ENCODE measurements at regions of chr16 and their contacts with region 1.

Region 1: DNA sequence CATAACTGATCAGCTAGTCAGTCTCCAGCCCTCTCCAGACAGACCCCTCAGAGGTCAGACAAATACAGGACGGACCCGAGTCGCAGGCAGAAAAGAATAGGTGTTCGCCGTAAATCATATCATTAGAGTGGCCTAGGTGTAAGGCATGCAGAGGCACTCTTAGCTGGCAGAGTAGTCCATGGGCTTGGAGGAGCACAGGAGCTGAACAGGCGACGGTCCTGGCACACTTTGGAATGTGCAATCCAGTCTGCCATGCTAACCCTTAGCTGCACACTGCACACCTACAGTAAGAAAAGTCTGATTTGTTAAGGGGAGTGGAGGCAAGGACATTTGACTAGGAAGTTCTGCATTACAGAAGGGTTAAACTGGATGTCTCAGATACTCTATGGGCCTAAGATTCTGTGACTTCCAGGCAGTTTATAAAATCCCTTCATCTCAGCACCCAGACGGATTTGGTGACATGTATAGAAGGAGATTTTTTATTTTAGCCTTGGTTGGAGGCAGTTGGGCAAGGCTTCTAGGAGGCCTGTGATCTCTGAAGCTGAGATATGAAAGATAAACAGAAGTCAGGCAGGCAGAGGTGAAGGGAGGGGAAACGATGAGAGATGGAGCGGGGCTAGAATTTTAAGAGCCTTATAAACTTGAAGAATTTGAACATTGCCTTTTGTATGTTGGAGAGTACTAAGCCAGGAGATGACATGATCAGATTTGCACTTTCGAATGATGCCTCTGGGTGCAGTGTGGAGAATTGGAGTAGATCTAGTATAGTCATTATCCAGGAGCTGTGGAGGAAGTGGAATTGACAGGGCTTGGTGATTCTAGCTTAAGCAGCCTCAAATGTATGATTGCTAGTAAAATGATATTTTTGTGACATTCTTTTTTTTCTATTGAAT is 34.6 kb upstream of the SLC5A11 start:
- DNase-seq: no peak
- H3K4me3 ChIP-seq: no peak overlapping the region
- H3K27ac ChIP-seq: peak overlapping the region in 3 of 4 donors; percentile 56 to 60 (median 58)
- H3K4me1 ChIP-seq: peaks cover 0 to 27% (median 22%) of the 10 kb centered on the region in 4 donors
- H3K27me3 ChIP-seq: no peaks in the 10 kb centered on the region
- CTCF ChIP-seq: no peak
- EP300 ChIP-seq: no peak
- POLR2A ChIP-seq: no peak

Region 2: DNA sequence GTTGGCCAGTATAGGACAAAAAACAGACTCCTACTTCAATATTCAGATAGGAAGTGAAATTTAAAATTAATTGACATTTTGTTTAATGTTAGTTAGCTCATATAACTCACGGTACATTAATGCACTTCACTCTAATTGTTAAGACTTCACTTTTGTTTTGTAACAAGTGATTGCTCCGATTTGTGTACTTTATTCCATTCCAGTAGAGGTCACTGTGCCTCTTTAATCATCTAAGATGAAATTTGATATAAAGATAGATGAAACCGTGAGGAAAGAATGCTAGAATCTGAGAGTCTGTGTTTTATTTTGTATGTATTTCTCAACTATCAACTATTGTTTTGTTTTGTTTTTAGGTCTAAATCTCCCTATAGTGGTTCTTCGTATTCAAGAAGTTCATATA is 242.8 kb before region 1 on chr16:
- intact Hi-C with region 1: loop called (anchors 5 kb)
- DNase-seq: no peak
- H3K4me3 ChIP-seq: no peak overlapping the region
- H3K27ac ChIP-seq: no peak overlapping the region
- H3K4me1 ChIP-seq: no peaks in the 10 kb centered on the region
- H3K27me3 ChIP-seq: no peaks in the 10 kb centered on the region
- CTCF ChIP-seq: peak in 1 of 4 experiments; percentile 25
- EP300 ChIP-seq: no peak
- POLR2A ChIP-seq: no peak

Region 3: DNA sequence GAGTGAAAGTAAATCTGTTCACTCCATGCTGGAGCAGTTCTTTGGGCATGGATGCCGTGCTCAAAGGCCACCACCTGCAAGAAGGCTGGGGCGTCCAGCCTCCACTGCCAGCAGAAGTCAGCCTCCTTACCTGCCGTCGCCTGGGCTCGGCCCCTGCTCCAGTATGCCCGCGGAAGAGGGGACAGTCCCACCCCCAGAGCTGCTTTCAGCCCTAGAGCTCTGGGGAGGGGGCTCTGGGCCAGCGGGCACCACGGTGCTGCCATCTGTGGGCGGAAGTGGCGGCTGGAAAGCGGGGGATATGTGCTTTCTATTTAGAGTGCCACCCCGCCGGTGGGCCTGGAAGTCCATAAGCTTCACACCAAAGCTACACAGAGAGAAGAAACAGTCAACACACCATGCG is 128.0 kb after region 1 on chr16:
- intact Hi-C with region 1: loop called (anchors 5 kb)
- DNase-seq: no peak
- H3K4me3 ChIP-seq: no peak overlapping the region
- H3K27ac ChIP-seq: no peak overlapping the region
- H3K4me1 ChIP-seq: peaks cover 0 to 9% (median 2%) of the 10 kb centered on the region in 4 donors
- H3K27me3 ChIP-seq: no peaks in the 10 kb centered on the region
- CTCF ChIP-seq: no peak
- EP300 ChIP-seq: no peak
- POLR2A ChIP-seq: no peak

Measured in sigmoid colon (tissue), 7 donors.